ENCODE measurements at regions of chr4 and their contacts with region 1.

Region 1: DNA sequence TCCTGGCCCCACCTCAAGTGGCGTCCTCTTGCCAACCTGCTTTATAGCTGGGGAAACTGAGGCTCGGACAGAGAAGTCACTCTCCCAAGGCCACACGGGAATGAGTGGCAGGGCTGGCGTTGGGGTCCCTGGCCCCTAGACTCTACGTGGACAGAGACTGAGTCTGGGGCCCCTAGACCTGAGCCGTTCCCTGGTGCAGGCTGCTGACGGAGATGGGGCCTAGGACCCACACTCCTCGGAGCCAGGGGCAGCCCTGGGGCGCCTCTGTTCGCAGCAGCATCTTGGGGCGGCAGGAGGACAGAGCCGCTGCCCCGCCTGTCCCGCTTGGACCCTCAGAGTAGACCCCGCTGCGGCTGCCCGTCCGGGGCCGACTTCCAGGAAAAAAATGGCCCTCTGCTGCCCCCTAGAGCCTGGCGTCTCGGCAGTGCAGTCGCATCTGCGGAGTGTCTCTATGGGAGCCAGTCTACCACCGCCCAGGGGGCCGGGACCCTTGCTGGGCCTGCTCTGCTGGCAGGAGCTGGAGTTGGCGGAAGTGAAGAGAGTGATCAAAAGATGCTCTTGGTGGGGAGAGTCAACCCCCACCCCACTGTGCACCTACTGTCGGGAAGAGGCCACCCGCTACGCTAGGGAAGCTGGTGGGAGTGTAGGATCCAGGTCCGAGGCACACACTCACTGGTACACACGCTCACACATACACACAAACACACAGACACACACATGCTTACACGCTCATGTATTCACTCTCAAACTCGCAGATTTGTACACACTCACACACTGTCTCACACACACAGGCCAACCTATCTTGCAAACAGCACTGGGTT is 220.1 kb downstream of the AFAP1 start:
- DNase-seq: peak; percentile 54 to 72
- ATAC-seq: peak; percentile 44 to 82 (median 70)
- H3K4me3 ChIP-seq: no peak overlapping the region
- H3K27ac ChIP-seq: no peak overlapping the region
- H3K4me1 ChIP-seq: peaks cover 0 to 7% (median 4%) of the 10 kb centered on the region in 9 donors
- H3K27me3 ChIP-seq: peaks cover 0 to 25% (median 12%) of the 10 kb centered on the region in 7 donors
- CTCF ChIP-seq: peak; percentile 61 to 89 (median 85)

Region 2: GRCh38 chr4:7192252-7193029 is 527.1 kb before region 1 on chr4 and contains the start of gene SORCS2:
- intact Hi-C with region 1: loop called in 9 of 10 experiments (anchors 2 to 5 kb)
- DNase-seq: peak; percentile 53 to 74
- ATAC-seq: peak; percentile 65 to 92 (median 80)
- H3K4me3 ChIP-seq: peak within 1 kb of the TSS; percentile 14 to 52 (median 44)
- H3K27ac ChIP-seq: no peak within 1 kb of the TSS
- H3K4me1 ChIP-seq: peaks cover 4 to 18% (median 13%) of the 10 kb centered on the region in 9 donors
- H3K27me3 ChIP-seq: peaks cover 7 to 83% (median 63%) of the 10 kb centered on the region in 7 donors
- CTCF ChIP-seq: peak; percentile 44 to 87 (median 64)
- total RNA-seq, gene SORCS2: 0.95 to 5.4 (median 2.6) TPM

Region 3: GRCh38 chr4:7307394-7308099 is 412.0 kb before region 1 on chr4:
- intact Hi-C with region 1: loop called in 2 of 10 experiments (anchors 10 kb)
- DNase-seq: peak in 1 of 2 donors; percentile 27
- ATAC-seq: peak in 7 of 8 donors; percentile 62 to 85 (median 73)
- H3K4me3 ChIP-seq: no peak overlapping the region
- H3K27ac ChIP-seq: no peak overlapping the region
- H3K4me1 ChIP-seq: peaks cover 0 to 25% (median 11%) of the 10 kb centered on the region in 9 donors
- H3K27me3 ChIP-seq: peaks cover 0 to 12% (median 0%) of the 10 kb centered on the region in 7 donors
- CTCF ChIP-seq: peak in 4 of 9 donors; percentile 8 to 48 (median 36)

Region 4: GRCh38 chr4:7328898-7329638 is 390.5 kb before region 1 on chr4:
- intact Hi-C with region 1: loop called in 2 of 10 experiments (anchors 10 kb)
- DNase-seq: peak; percentile 63 to 71
- ATAC-seq: peak; percentile 50 to 87 (median 74)
- H3K4me3 ChIP-seq: no peak overlapping the region
- H3K27ac ChIP-seq: peak overlapping the region in 2 of 10 donors; percentile 15 to 34
- H3K4me1 ChIP-seq: peaks cover 0 to 31% (median 3%) of the 10 kb centered on the region in 9 donors
- H3K27me3 ChIP-seq: no peaks in the 10 kb centered on the region
- CTCF ChIP-seq: peak in 3 of 9 donors; percentile 25 to 30 (median 25)

Region 5: DNA sequence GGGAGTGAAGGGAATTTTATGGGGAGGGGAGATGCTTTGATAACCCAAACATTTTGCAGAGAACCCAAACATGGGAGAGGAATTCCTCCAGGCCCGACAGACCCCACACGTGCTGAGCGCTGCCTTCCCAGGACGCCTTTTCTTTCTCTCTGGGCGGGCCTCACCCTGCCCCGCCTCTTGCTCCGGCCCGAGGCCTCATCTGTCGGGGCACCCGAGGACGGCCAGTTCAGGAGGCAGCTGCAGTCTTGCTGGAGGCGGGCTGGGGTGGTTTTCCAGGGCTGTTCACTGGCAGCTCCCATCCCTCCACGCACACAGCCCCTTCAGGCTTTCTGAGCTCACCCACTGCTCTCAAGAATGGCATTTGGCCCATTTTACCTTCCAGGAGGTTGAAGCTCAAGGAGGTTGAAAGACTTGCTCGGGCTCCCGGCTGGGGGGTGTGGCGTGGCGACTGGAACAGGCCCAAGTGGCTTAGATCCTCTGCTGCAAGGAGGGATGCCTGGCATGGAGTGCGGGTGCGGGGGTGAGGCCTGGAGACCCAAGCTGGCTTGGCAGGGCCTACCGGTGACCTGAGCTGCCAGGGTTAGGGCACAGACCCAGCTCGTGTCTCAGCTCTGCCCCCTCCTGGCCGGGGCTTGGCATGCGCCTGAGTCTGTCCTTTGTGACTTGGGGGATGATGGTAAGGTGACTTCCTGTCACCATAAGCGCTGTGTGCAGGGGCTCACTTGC is 384.1 kb before region 1 on chr4:
- intact Hi-C with region 1: loop called in 1 of 10 experiments (anchors 10 kb)
- DNase-seq: peak; percentile 39 to 67
- ATAC-seq: peak in 7 of 8 donors; percentile 43 to 64 (median 55)
- H3K4me3 ChIP-seq: no peak overlapping the region
- H3K27ac ChIP-seq: no peak overlapping the region
- H3K4me1 ChIP-seq: peaks cover 0 to 28% (median 0%) of the 10 kb centered on the region in 9 donors
- H3K27me3 ChIP-seq: no peaks in the 10 kb centered on the region
- CTCF ChIP-seq: peak; percentile 41 to 72 (median 63)

Region 6: DNA sequence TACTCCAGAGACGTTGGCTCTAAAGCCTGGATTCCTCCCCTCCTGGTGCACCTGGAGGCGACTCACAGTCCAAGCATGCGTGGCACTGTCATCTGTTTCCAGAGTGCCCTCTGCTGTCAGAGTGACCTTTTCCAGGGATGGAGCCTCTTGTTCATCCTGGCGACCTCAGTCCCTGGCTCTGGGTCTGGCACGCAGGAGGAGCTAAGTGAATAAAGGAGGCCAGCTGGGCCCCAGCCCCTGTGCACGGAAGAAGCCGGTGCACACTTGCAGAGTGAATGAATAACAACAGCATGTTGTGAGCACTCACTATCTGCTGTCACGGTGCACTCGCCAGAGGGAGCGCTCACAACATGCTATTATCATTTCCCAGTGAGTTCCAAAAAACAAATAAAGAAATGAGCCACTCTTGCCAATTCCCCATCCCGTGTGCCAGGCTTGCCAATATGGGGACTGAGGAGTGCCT is 257.0 kb before region 1 on chr4:
- intact Hi-C with region 1: loop called in 7 of 10 experiments (anchors 2 to 10 kb)
- DNase-seq: peak in 1 of 2 donors; percentile 30
- ATAC-seq: peak; percentile 23 to 79 (median 58)
- H3K4me3 ChIP-seq: no peak overlapping the region
- H3K27ac ChIP-seq: no peak overlapping the region
- H3K4me1 ChIP-seq: peaks cover 0 to 22% (median 8%) of the 10 kb centered on the region in 9 donors
- H3K27me3 ChIP-seq: peaks cover 0 to 6% (median 0%) of the 10 kb centered on the region in 7 donors
- CTCF ChIP-seq: peak in 6 of 9 donors; percentile 30 to 61 (median 46)

Region 7: GRCh38 chr4:7649741-7650531 is 69.6 kb before region 1 on chr4:
- intact Hi-C with region 1: no loop called
- DNase-seq: no peak
- ATAC-seq: peak in 7 of 8 donors; percentile 15 to 38 (median 25)
- H3K4me3 ChIP-seq: no peak overlapping the region
- H3K27ac ChIP-seq: peak overlapping the region in 1 of 10 donors; percentile 72
- H3K4me1 ChIP-seq: peaks cover 0 to 76% (median 0%) of the 10 kb centered on the region in 9 donors
- H3K27me3 ChIP-seq: peaks cover 0 to 35% (median 16%) of the 10 kb centered on the region in 7 donors
- CTCF ChIP-seq: peak in 1 of 9 donors; percentile 7

Region 8: GRCh38 chr4:7802093-7802726 is 82.6 kb after region 1 on chr4:
- intact Hi-C with region 1: no loop called
- DNase-seq: peak; percentile 76 to 87
- ATAC-seq: peak; percentile 40 to 66 (median 56)
- H3K4me3 ChIP-seq: no peak overlapping the region
- H3K27ac ChIP-seq: no peak overlapping the region
- H3K4me1 ChIP-seq: peaks cover 9 to 36% (median 32%) of the 10 kb centered on the region in 9 donors
- H3K27me3 ChIP-seq: no peaks in the 10 kb centered on the region
- CTCF ChIP-seq: peak; percentile 90 to 96 (median 94)